Psoas muscle (tissue), 8 donors: ENCODE measurements at regions of chr14 and their contacts with region 1.

Region 1: GRCh38 chr14:101964297-101965144 is at the start of gene DYNC1H1:
- DNase-seq: peak; percentile 97
- ATAC-seq: peak; percentile 87 to 92 (median 90)
- H3K4me3 ChIP-seq: peak within 1 kb of the TSS; percentile 98
- H3K27ac ChIP-seq: peak within 1 kb of the TSS; percentile 96
- H3K4me1 ChIP-seq: peaks cover 32% of the 10 kb centered on the region
- H3K27me3 ChIP-seq: no peaks in the 10 kb centered on the region
- CTCF ChIP-seq: no peak
- total RNA-seq, gene DYNC1H1: 332 to 634 (median 549) TPM

Region 2: GRCh38 chr14:102086972-102087761 is 122.6 kb after region 1 on chr14 and contains the start of gene HSP90AA1:
- intact Hi-C with region 1: loop called in 1 of 2 experiments (anchors 5 kb)
- DNase-seq: peak; percentile 95 to 98
- ATAC-seq: peak; percentile 90 to 94 (median 92)
- H3K4me3 ChIP-seq: peak within 1 kb of the TSS; percentile 80
- H3K27ac ChIP-seq: peak within 1 kb of the TSS; percentile 97
- H3K4me1 ChIP-seq: peaks cover 42% of the 10 kb centered on the region
- H3K27me3 ChIP-seq: no peaks in the 10 kb centered on the region
- CTCF ChIP-seq: peak; percentile 12
- total RNA-seq, gene HSP90AA1: 398 to 659 (median 540) TPM

Region 3: DNA sequence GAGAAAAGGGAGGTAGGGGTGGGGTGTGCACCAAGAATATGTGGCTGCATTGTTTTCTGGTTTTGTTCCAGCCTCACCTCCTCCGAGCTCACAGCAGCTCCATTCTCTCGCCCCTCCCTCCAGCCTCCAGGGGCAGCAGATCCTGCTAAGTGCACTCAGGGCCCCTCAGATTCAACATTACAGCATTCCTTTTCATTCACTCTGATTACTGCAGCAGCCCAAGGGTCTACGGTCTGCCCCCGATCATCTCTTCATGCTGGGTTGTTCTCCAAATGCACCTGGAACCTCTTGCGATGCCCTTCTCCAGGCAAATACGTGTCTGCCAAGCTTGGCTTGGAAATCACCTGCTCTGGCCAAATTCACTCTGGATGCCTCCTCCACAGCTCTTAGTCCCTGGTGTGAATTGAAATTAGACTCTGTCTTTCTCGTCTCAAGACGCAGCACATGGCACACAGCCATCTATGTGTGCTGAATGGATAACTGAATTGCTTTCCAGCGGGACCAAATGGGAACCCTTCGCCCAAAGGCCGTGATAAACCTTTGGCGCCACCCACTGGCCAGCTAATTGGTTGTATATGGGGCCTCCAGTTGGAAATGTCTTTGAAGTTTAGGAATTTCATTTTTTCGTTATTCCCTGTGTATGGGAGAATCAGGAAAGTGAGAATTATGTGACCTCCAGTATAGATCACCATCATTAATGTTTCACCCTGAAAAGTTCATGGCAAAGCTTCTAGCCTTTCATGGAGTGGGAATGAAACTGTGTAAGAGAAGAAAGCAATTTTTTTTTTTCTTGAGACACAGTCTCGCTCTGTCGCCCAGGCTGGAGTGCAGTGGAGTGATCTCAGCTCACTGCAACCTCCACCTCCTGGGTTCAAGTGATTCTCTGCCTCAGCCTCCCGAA is 131.9 kb after region 1 on chr14:
- intact Hi-C with region 1: loop called in 1 of 2 experiments (anchors 2 kb)
- DNase-seq: peak; percentile 88 to 93
- ATAC-seq: peak; percentile 85 to 98 (median 88)
- H3K4me3 ChIP-seq: no peak overlapping the region
- H3K27ac ChIP-seq: no peak overlapping the region
- H3K4me1 ChIP-seq: peaks cover 10% of the 10 kb centered on the region
- H3K27me3 ChIP-seq: no peaks in the 10 kb centered on the region
- CTCF ChIP-seq: peak; percentile 84